Esophagus squamous epithelium (tissue), 5 donors: ENCODE measurements at regions of chr1 and their contacts with region 1.

Region 1: GRCh38 chr1:23539698-23540266 is 8.7 kb upstream of the E2F2 start:
- DNase-seq: peak; percentile 44
- H3K4me3 ChIP-seq: peak overlapping the region in 2 of 4 donors; percentile 10 to 42
- H3K27ac ChIP-seq: peak overlapping the region in 3 of 4 donors; percentile 1 to 64 (median 52)
- H3K4me1 ChIP-seq: peaks cover 10 to 35% (median 12%) of the 10 kb centered on the region in 3 donors
- H3K27me3 ChIP-seq: no peaks in the 10 kb centered on the region
- CTCF ChIP-seq: peak; percentile 91 to 98 (median 94)
- POLR2A ChIP-seq: no peak

Region 2: GRCh38 chr1:23492132-23492720 is 47.6 kb before region 1 on chr1:
- intact Hi-C with region 1: loop called (anchors 2 kb)
- DNase-seq: no peak
- H3K4me3 ChIP-seq: no peak overlapping the region
- H3K27ac ChIP-seq: no peak overlapping the region
- H3K4me1 ChIP-seq: peaks cover 0 to 3% (median 0%) of the 10 kb centered on the region in 3 donors
- H3K27me3 ChIP-seq: peaks cover 0 to 4% (median 0%) of the 10 kb centered on the region in 4 donors
- CTCF ChIP-seq: no peak
- POLR2A ChIP-seq: no peak

Region 3: DNA sequence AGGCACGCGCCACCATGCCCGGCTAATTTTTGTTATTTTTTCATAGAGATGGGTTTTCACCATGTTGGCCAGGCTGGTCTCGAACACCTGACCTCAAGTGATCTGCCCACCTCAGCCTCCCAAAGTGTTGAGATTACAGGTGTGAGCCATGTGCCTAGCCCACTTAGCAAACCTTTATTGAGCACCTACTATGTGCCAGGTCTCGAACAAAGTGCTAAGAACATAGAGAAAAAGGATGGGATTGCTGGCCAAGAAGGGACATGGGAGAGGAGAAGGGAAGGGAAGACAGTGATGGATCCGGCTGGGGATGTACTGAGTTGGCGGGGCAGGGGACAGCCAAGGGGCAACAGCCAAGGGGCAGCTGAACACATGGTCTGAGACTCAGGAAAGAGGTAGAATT is 96.2 kb after region 1 on chr1:
- intact Hi-C with region 1: loop called (anchors 2 kb)
- DNase-seq: no peak
- H3K4me3 ChIP-seq: no peak overlapping the region
- H3K27ac ChIP-seq: no peak overlapping the region
- H3K4me1 ChIP-seq: peaks cover 0 to 30% (median 3%) of the 10 kb centered on the region in 3 donors
- H3K27me3 ChIP-seq: peaks cover 0 to 8% (median 0%) of the 10 kb centered on the region in 4 donors
- CTCF ChIP-seq: no peak
- POLR2A ChIP-seq: no peak

Region 4: DNA sequence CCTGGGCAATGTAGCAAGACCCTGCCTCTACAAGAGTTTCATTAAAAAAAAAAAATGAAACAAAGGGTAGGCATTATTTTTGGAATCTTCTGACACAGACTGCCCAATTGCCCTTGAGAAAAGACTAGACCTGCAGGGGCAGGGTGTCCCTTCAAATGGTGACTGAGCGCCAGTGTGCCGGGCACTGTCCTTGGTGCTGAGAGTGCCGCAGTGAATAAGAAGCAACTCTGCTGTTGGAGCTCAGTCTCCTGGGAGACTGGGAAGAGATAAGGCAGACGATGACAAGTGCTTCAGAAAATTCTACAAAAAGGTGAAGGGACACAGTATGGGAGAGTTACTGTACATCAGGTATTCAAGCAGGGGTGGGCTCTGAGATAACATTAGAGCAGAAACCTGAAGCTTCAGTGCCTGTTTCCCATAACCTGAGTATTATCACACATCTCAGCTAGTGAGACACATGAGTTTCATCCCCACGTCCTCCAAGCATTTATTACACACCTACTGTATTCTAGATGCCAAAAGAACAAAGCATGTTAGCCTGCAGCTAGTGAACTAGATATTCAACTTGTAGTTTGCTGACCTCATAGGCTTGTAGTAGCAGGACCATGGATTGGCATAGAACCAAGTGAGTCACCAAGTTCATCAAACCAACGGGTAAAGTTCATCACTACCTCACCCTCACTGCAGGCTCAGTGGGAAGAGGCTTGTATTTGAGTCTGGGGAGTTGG is 133.5 kb after region 1 on chr1:
- intact Hi-C with region 1: no loop called
- DNase-seq: no peak
- H3K4me3 ChIP-seq: no peak overlapping the region
- H3K27ac ChIP-seq: peak overlapping the region in 1 of 4 donors; percentile 37
- H3K4me1 ChIP-seq: peaks cover 0 to 17% (median 0%) of the 10 kb centered on the region in 3 donors
- H3K27me3 ChIP-seq: peaks cover 0 to 16% (median 0%) of the 10 kb centered on the region in 4 donors
- CTCF ChIP-seq: no peak
- POLR2A ChIP-seq: no peak